Transverse colon (tissue), 4 donors: ENCODE measurements at regions of chr7 and their contacts with region 1.

Region 1: GRCh38 chr7:124152859-124153692 is 120.2 kb upstream of the TMEM229A start:
- DNase-seq: no peak
- H3K4me3 ChIP-seq: no peak overlapping the region
- H3K27ac ChIP-seq: no peak overlapping the region
- H3K4me1 ChIP-seq: no peaks in the 10 kb centered on the region
- H3K27me3 ChIP-seq: peaks cover under 1% of the 10 kb centered on the region
- CTCF ChIP-seq: peak in 4 of 5 experiments; percentile 7 to 28 (median 26)
- EP300 ChIP-seq: no peak
- POLR2A ChIP-seq: no peak

Region 2: GRCh38 chr7:123864436-123864835 is 288.6 kb before region 1 on chr7:
- in situ Hi-C with region 1: no loop called
- intact Hi-C with region 1: no loop called
- DNase-seq: peak; percentile 57
- H3K4me3 ChIP-seq: no peak overlapping the region
- H3K27ac ChIP-seq: peak overlapping the region; percentile 64 to 82 (median 74)
- H3K4me1 ChIP-seq: peaks cover 4 to 21% (median 11%) of the 10 kb centered on the region in 4 donors
- H3K27me3 ChIP-seq: no peaks in the 10 kb centered on the region
- CTCF ChIP-seq: no peak
- EP300 ChIP-seq: no peak
- POLR2A ChIP-seq: no peak

Region 3: GRCh38 chr7:124784879-124785818 is 632.1 kb after region 1 on chr7:
- in situ Hi-C with region 1: loop called in 3 of 4 experiments (anchors 10 to 25 kb)
- intact Hi-C with region 1: no loop called
- DNase-seq: peak; percentile 44
- H3K4me3 ChIP-seq: no peak overlapping the region
- H3K27ac ChIP-seq: no peak overlapping the region
- H3K4me1 ChIP-seq: no peaks in the 10 kb centered on the region
- H3K27me3 ChIP-seq: no peaks in the 10 kb centered on the region
- CTCF ChIP-seq: peak; percentile 62 to 75 (median 63)
- EP300 ChIP-seq: no peak
- POLR2A ChIP-seq: no peak